Right cardiac atrium (tissue), 5 donors: ENCODE measurements at regions of chr18 and their contacts with region 1.

Region 1: DNA sequence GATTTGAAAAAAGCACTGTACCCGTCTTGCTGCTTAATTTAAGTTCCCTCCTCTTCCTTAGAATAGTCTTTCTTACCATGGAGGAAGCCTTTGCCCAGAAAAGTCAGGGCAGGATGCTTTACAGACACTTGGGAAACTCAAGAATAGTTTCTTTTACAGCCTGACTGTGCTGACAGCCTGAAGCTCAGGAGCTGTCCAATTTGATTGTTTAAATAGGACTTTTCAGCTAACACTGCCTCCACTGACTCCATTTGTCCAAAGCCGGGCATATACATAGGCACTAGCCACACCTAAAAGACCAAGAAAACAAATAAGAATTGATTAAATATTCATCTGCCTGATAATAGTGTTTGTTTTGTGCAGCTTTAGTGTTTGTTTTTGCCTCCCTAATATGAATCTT is 110.9 kb upstream of the L3MBTL4 start:
- DNase-seq: no peak
- ATAC-seq: no peak
- H3K4me3 ChIP-seq: no peak overlapping the region
- H3K27ac ChIP-seq: no peak overlapping the region
- H3K4me1 ChIP-seq: no peaks in the 10 kb centered on the region
- H3K27me3 ChIP-seq: no peaks in the 10 kb centered on the region

Region 2: DNA sequence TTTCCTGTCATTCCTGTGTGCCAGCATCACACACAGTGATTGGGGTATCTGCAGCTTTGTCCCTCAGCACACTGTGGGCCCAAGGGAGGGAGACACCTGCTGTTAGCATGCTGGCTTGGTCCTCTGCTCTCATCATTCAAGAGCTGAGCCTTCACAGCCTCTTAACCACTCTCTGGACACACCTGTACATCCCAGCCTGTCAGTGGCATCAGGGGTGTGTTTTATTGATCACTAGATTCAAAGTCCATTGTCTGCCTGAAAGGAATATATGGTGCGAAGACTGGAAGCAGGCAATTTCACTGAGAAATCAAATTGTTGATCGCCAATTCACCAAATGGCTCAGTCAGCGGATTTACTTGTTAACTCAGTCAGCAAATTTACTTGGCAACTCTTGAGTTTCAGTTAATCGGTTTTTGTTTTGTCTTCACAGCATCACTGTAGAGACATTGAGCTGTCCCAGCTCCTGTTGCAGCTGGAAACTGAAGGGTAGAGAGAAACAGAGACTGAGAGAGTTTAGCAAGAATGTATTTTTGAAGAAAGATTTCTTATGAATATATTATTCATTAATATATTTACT is 574.0 kb before region 1 on chr18:
- intact Hi-C with region 1: loop called in 1 of 4 experiments (anchors 5 kb)
- DNase-seq: no peak
- ATAC-seq: no peak
- H3K4me3 ChIP-seq: no peak overlapping the region
- H3K27ac ChIP-seq: no peak overlapping the region
- H3K4me1 ChIP-seq: no peaks in the 10 kb centered on the region
- H3K27me3 ChIP-seq: no peaks in the 10 kb centered on the region

Region 3: DNA sequence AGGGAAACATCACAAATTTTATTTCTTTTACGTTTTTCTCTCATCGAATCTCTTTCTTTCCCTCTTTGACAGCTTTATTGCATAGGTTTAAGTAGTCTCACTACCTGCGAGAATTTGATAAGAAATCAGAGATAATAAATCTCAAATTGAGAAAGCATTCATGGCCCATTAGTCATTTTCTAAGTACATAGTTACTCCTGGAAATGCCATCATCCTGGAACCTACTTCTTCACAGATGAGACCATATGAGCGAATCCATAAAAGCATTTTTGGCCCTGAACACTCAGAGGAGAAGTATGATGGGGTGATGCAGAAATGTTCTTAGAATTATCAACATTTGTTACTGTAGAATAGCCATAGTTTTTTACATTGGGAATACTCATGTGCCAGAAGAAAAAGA is 65.9 kb after region 1 on chr18:
- intact Hi-C with region 1: no loop called
- DNase-seq: no peak
- ATAC-seq: no peak
- H3K4me3 ChIP-seq: no peak overlapping the region
- H3K27ac ChIP-seq: no peak overlapping the region
- H3K4me1 ChIP-seq: no peaks in the 10 kb centered on the region
- H3K27me3 ChIP-seq: no peaks in the 10 kb centered on the region